Prostate gland (tissue), 2 donors: ENCODE measurements at regions of chr14 and their contacts with region 1.

Region 1: GRCh38 chr14:76784266-76785264 is 23.3 kb downstream of the VASH1 start:
- DNase-seq: no peak
- H3K4me3 ChIP-seq: no peak overlapping the region
- H3K27ac ChIP-seq: no peak overlapping the region
- H3K4me1 ChIP-seq: no peaks in the 10 kb centered on the region
- H3K27me3 ChIP-seq: no peaks in the 10 kb centered on the region
- CTCF ChIP-seq: peak in 3 of 4 experiments; percentile 41 to 68 (median 51)
- POLR2A ChIP-seq: no peak

Region 2: DNA sequence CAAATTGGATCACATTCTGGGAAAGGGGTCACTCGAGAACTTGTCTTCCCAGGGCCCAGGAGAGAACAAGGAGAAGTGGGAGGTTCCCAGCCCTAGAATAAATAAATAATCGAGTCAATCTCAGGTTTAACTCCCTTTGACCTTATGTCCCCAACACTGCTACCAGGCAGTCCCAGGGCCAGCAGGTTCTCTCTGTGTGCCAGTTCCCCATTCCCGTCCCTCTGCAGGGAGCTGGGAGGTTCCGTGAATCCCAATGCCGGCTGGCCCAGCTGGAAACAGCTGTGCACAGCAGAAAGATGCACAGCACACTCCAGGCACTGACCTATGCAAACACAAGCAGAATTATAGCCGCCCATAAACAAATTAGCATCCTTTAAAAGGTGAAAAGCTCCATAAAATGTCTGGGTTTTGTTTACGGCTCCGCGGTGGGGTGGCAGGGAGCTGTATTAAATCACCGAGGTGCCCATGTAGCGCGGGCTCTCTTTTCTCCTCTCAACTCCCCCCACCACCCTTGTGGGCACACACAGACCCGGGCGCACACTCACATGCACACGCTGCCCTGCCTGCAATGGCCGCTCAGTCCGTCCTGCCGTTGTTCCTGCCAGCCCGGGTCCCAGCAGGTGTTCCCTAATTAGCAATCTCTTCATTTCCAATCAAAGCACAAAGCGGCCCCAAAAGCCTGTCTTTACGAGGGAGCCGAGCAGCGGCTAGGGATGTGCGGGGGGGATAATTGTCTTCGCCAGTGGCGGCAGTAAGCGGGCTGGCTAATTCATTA is 455.2 kb before region 1 on chr14:
- intact Hi-C with region 1: no loop called
- DNase-seq: no peak
- H3K4me3 ChIP-seq: no peak overlapping the region
- H3K27ac ChIP-seq: no peak overlapping the region
- H3K4me1 ChIP-seq: no peaks in the 10 kb centered on the region
- H3K27me3 ChIP-seq: no peaks in the 10 kb centered on the region
- CTCF ChIP-seq: no peak
- POLR2A ChIP-seq: no peak

Region 3: GRCh38 chr14:76603713-76604112 is 180.9 kb before region 1 on chr14:
- intact Hi-C with region 1: no loop called
- DNase-seq: no peak
- H3K4me3 ChIP-seq: no peak overlapping the region
- H3K27ac ChIP-seq: no peak overlapping the region
- H3K4me1 ChIP-seq: no peaks in the 10 kb centered on the region
- H3K27me3 ChIP-seq: no peaks in the 10 kb centered on the region
- CTCF ChIP-seq: no peak
- POLR2A ChIP-seq: no peak

Region 4: DNA sequence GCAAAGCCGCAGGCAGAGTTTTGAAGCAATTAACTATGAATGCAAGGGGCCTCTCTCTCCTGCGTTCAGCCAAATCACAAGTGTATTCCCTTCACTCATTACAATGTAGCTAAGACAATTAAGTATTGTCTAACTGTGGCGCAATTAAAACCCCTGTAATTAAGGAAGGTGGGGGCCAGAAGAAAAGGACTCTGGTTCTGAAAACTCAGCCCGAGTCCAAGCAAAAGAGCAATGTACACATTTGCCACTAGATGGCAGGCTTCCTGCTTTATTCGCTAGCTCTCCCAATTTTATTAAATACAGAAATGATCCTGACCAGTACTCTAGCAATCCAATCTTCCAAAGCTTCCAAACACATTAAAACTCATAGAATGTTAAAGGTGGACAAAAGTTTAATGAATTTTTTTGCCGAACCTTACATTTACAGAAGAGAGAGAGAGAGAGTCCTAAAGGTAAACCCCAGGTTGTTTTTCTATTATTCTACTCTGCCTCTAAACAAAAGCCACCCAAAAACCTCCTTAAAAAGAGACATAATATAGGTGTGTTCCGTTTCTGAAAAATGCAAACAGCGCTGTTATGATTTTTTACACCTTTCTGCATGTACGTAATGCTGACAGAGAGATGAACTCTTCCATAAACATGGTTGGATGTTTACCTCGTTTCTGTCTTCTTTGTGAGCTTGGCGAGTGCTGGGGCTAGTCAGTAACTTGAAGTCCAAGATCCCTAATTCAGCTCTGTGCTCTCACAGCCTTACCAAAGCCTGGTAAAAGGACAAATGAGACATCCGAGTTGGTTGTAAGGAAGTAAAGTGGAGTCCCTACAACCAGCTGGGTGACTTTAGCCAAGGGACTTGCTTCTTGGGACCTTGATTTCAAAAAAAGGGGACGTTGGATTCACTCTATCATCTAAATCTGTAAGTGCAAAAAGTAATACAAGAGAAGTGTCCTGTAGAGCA is 74.2 kb before region 1 on chr14:
- intact Hi-C with region 1: loop called (anchors 5 kb)
- DNase-seq: no peak
- H3K4me3 ChIP-seq: no peak overlapping the region
- H3K27ac ChIP-seq: no peak overlapping the region
- H3K4me1 ChIP-seq: no peaks in the 10 kb centered on the region
- H3K27me3 ChIP-seq: no peaks in the 10 kb centered on the region
- CTCF ChIP-seq: peak; percentile 54 to 73 (median 66)
- POLR2A ChIP-seq: no peak